AG04450 (cell line): ENCODE measurements at regions of chr1 and their contacts with region 1.

Region 1: DNA sequence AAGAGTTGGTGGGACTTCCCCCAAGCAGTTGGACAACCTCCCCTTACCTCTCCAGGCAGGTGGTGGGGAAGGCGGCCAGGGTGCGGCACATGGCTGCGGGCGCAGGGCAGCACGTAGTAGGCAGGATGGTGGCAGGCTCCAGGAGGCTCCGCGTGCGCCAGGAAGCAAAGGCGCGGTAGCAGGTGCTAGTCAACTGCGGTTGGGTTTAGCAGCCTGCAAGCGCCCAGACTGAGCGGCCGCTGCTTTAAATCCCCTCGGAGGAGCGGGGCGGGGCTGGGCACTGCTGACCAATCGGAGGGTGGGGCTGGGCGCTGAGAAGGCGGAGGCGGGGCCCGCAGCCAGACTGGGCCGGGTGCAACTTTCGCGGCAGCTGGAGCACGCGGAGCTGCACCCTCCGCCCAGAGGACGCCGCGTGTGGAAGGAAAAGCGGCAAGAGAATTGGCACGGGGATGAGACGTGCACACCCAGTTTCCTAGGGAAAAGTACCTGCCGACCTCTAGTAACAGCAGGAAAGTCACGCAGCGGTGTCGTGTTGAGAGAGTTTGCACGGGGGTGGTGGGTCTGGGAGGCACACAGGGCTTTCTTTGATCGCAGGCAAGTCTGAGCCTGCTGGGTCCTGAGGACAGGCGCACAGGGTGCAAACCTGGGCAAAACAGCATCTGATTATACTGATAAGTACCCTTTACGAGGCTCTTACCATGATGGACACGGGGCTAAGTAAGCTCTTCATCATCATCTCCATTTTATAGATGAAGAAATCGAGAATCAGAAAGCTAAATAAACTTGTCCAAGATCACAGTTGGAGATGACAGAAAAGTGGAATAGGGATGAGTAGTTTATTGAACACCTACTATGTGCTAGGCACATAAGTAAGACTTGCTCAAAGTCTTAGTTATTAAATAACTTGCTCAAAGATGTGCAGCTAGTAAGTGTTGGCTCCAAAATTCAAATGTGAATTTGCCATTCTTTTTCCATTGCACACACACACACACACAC is at the start of gene RGS16:
- DNase-seq: peak; percentile 21
- H3K4me3 ChIP-seq: peak within 1 kb of the TSS; percentile 58
- H3K27ac ChIP-seq: no peak within 1 kb of the TSS
- H3K27me3 ChIP-seq: peaks cover 26% of the 10 kb centered on the region
- CTCF ChIP-seq: no peak
- polyA plus RNA-seq, gene RGS16: 0.10 and 0.11 TPM in 2 replicates

Region 2: GRCh38 chr1:182588500-182589452 is 15.7 kb before region 1 on chr1 and contains the start of gene RNASEL:
- CTCF ChIA-PET with region 1: interaction called, 34 read pairs
- POLR2A ChIA-PET with region 1: no interaction called
- DNase-seq: peak; percentile 6
- H3K4me3 ChIP-seq: peak within 1 kb of the TSS; percentile 77
- H3K27ac ChIP-seq: peak within 1 kb of the TSS; percentile 91
- H3K27me3 ChIP-seq: peaks cover 9% of the 10 kb centered on the region
- CTCF ChIP-seq: no peak
- polyA plus RNA-seq, gene RNASEL: 4.9 and 6.2 TPM in 2 replicates

Region 3: GRCh38 chr1:182614796-182615454 is 10.5 kb after region 1 on chr1:
- CTCF ChIA-PET with region 1: interaction called, 33 read pairs
- POLR2A ChIA-PET with region 1: interaction called, 3 read pairs
- DNase-seq: peak; percentile 44
- H3K4me3 ChIP-seq: peak overlapping the region; percentile 57
- H3K27ac ChIP-seq: peak overlapping the region; percentile 77
- H3K27me3 ChIP-seq: peaks cover 19% of the 10 kb centered on the region
- CTCF ChIP-seq: no peak

Region 4: GRCh38 chr1:182789138-182790076 is 184.9 kb after region 1 on chr1 and contains the start of gene NPL:
- CTCF ChIA-PET with region 1: interaction called, 552 read pairs
- POLR2A ChIA-PET with region 1: interaction called, 5 read pairs
- DNase-seq: peak; percentile 10
- H3K4me3 ChIP-seq: peak within 1 kb of the TSS; percentile 68
- H3K27ac ChIP-seq: no peak within 1 kb of the TSS
- H3K27me3 ChIP-seq: peaks cover 38% of the 10 kb centered on the region
- CTCF ChIP-seq: no peak
- polyA plus RNA-seq, gene NPL: 0.48 and 0.55 TPM in 2 replicates